ENCODE measurements at regions of chr1 and their contacts with region 1.

Region 1: GRCh38 chr1:212558693-212559480 is 49.7 kb upstream of the ATF3 start:
- DNase-seq: peak; percentile 58 to 86
- H3K4me3 ChIP-seq: peak overlapping the region; percentile 67
- H3K27ac ChIP-seq: peak overlapping the region; percentile 63
- H3K4me1 ChIP-seq: peaks cover 23% of the 10 kb centered on the region
- H3K27me3 ChIP-seq: no peaks in the 10 kb centered on the region
- CTCF ChIP-seq: no peak

Region 2: DNA sequence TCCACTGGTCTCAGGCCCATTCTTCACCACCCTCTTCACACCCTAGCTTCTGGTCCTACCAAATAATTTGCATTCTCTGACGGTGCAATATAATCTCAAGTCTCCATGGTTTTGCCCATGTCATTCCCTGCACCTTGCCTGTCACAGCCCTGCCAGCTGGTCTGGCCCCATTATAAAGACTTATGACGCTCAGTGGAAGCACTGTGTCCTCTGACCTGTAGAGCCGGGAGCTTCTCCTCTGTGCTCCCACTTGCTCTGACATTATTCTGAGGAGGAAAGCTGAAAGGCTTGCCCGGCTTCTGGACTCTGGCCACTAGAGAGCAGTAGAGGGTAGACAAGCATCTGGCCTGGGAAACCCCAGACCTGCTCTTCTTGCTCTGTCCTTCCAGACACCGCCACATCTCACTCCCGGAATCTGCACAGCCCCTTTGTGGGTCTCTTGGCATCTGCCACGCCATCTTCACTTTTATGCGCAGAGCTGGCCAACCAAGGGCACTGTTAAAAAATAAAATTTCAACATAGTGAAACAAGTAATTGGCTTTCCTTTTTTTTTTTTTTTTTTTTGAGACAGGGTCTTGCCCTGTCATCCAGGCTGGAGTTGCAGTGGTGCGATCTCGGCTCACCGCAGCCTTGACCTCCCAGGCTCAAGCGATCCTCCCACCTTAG is 81.7 kb before region 1 on chr1:
- CTCF ChIA-PET with region 1: interaction called, 9 read pairs
- POLR2A ChIA-PET with region 1: no interaction called
- intact Hi-C with region 1: loop called (anchors 2 kb)
- DNase-seq: peak; percentile 74 to 81
- H3K4me3 ChIP-seq: no peak overlapping the region
- H3K27ac ChIP-seq: no peak overlapping the region
- H3K4me1 ChIP-seq: peaks cover 12% of the 10 kb centered on the region
- H3K27me3 ChIP-seq: no peaks in the 10 kb centered on the region
- CTCF ChIP-seq: peak; percentile 92

Region 3: DNA sequence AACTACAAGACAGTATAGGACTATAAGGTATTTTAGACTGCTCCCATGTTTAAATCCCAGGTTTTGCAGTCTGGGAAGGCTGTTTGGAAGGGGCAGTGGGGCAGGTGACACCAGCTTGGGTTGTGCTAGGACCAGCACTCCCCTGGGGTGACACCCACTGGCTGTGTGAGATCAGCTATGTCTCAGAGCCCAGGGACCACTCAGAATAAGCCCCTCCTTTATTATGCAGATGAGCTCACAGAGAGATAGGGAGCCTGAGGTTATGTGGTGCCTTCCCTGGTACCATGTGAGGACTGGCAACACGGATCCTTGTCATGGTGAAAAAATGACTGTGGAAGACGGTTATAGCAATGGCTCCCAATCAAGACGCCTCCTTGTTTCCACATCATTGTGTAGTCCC is 55.2 kb before region 1 on chr1:
- CTCF ChIA-PET with region 1: interaction called, 11 read pairs
- POLR2A ChIA-PET with region 1: no interaction called
- intact Hi-C with region 1: no loop called
- DNase-seq: no peak
- H3K4me3 ChIP-seq: no peak overlapping the region
- H3K27ac ChIP-seq: no peak overlapping the region
- H3K4me1 ChIP-seq: peaks cover 2% of the 10 kb centered on the region
- H3K27me3 ChIP-seq: no peaks in the 10 kb centered on the region
- CTCF ChIP-seq: no peak

Region 4: GRCh38 chr1:212595787-212596714 is 37.2 kb after region 1 on chr1:
- CTCF ChIA-PET with region 1: no interaction called
- POLR2A ChIA-PET with region 1: no interaction called
- intact Hi-C with region 1: loop called (anchors 1 kb)
- DNase-seq: peak; percentile 61 to 99
- H3K4me3 ChIP-seq: peak overlapping the region; percentile 29
- H3K27ac ChIP-seq: peak overlapping the region; percentile 84
- H3K4me1 ChIP-seq: peaks cover 31% of the 10 kb centered on the region
- H3K27me3 ChIP-seq: 0 out of 2 replicates have a peak, but pooled peaks cover 13% of the 10 kb centered on the region
- CTCF ChIP-seq: peak; percentile 94